ENCODE measurements at regions of chr1 and their contacts with region 1.

Region 1: DNA sequence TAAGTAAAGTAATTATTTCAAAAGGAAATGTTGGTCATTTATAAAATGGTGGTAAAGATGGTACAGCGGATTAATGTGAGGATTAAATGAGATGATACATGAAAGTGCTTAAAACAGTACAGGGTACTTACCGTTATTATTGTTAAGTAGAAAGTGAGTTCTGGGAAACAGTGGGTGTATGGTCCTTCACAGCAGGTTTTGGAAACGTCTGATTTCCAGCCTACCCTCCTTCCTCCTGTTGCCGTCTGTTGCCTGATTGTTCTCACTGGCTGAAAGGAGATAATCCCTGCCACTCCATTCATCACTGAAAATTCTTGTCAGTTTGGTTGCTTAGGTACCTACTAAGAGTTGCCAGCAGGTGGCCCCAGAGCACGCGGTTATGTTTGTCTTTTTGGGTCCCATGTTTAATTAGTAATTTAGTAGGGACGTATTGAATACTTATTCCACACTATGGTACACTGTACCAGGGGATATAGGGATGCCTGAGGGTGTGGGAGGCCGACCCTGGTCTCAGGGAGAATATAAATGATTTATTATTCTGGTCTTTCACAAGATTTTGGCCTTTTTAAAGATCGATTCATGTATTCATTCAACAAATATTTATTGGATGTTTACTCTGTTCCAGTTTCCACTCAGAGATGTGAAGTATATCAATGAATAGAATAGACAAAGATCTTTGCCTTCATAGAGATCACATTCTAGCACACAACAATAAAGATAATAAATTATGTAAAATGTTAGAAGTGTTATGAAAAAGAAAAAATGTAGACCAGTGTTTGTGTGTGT is 30.8 kb upstream of the RPTN start:
- DNase-seq: peak; percentile 65
- CTCF ChIP-seq: peak; percentile 71

Region 2: DNA sequence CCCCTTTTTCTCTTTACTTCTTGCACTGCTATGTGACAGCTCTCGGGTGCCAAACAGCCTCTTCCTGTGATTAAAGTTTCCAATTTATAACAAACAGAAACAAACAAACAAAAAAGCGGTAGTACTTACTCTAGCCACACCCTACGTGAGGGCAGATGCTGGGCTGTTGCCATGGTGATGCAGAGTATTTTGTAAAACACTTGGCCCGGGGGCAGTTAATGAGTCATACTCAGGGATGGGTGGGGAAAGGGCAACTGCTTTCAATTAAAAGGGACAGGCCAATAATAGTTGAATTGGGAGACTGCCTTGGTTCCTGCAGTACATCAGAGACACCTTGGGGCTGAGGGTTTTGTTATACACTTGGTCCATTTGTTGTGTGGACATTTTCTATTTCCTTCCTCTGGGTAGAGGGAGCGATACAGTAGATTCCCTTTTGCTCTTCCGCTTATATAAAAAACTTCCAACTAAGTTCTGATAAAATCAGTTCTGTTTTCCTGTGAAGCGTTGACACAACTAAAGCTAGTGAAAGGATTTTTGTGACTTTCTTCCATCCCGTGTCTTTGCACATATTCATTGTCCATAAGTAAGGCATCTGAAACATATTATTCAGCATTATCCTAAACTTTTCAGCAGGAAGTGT is 244.0 kb before region 1 on chr1:
- CTCF ChIA-PET with region 1: no interaction called
- POLR2A ChIA-PET with region 1: no interaction called
- DNase-seq: peak; percentile 31
- CTCF ChIP-seq: no peak

Region 3: DNA sequence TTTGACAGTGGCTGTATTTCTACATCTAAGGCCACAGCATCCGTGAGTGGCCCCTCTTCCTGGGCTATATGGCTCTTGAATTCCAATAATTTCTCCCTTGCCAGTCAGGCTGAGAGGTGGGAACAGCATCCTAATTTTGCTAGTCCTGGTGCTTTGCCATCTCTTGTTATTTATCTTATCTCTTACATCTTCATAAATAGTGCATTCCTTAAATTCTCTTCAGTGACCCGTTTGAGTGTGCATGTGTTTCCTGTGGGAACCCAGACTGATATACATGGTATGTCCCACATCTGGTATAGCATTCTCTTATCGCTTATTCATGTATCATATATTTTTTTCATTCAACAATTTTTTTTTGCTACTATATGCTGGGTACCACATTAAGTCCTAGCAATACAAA is 163.0 kb before region 1 on chr1:
- CTCF ChIA-PET with region 1: no interaction called
- POLR2A ChIA-PET with region 1: no interaction called
- DNase-seq: no peak
- CTCF ChIP-seq: no peak

Region 4: GRCh38 chr1:152127670-152128069 is 62.2 kb before region 1 on chr1:
- CTCF ChIA-PET with region 1: interaction called, 10 read pairs
- POLR2A ChIA-PET with region 1: no interaction called
- DNase-seq: no peak
- CTCF ChIP-seq: no peak

Region 5: GRCh38 chr1:152148981-152149380 is 40.9 kb before region 1 on chr1:
- CTCF ChIA-PET with region 1: interaction called, 17 read pairs
- POLR2A ChIA-PET with region 1: no interaction called
- DNase-seq: no peak
- CTCF ChIP-seq: no peak

Region 6: DNA sequence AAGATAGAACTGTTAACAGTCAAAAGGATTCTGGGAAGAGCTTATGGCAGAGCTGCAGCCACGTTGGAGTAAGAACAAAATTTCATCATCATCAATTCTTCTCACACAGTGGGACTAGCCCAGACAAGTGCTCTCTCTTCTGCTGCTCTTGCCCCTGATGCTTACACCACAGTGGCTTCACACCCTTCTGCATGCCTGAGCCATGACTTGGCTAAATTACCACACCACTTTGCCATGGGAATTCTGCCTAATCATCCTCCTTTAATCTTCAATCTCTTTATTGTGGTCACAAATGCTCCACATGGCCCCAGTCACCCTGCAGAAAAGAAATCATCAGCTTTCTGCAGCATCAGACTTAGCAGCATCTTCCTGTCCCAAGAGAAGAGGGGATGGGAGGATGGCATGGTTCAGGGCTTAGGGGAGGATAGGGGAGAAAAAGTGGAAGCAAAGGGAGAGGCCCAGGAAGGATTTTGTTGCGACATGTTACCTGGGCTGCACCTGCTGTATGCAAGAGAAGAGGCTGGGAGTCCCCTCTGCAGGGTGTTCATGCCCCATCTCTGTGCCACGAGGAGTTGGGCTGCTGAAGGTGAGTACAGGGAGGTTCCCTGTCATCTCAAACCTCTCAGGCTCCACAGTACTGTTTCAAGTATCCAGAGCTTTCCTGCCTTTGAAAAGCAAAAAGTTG is 21.9 kb before region 1 on chr1:
- CTCF ChIA-PET with region 1: interaction called, 165 read pairs
- POLR2A ChIA-PET with region 1: no interaction called
- DNase-seq: no peak
- CTCF ChIP-seq: no peak

Region 7: GRCh38 chr1:152220166-152221163 is 30.6 kb after region 1 on chr1:
- CTCF ChIA-PET with region 1: no interaction called
- POLR2A ChIA-PET with region 1: no interaction called
- DNase-seq: no peak
- CTCF ChIP-seq: no peak

Region 8: DNA sequence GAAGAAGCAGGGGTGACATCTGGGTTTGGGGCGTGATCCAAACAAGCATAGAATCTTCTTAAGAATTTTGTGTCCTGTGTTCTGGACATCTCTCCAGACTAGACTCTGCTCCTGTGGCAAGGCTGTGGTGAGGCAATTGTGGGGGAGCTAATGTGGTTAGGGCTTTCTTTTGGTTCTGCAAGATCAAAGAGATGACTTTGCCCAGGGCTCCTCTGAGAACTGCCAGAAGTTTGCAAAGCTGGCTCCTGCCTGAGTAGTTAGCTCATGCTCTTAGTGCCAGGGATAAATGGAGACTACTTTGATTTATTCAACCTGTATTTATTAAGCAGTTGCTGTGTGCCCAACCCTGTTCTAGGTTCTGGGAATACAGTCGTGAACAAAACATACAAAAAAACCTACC is 258.2 kb after region 1 on chr1:
- CTCF ChIA-PET with region 1: interaction called, 21 read pairs
- POLR2A ChIA-PET with region 1: no interaction called
- DNase-seq: no peak
- CTCF ChIP-seq: no peak

Measured in GM10248 (cell line).